Dendritic cell treated with granulocyte-macrophage colony-stimulating factor and Interleukin-4, amounts not matched to agents 40 ng/mL and 50 ng/mL, for 4 days (primary cell): ENCODE measurements at regions of chr12 and their contacts with region 1.

Region 1: DNA sequence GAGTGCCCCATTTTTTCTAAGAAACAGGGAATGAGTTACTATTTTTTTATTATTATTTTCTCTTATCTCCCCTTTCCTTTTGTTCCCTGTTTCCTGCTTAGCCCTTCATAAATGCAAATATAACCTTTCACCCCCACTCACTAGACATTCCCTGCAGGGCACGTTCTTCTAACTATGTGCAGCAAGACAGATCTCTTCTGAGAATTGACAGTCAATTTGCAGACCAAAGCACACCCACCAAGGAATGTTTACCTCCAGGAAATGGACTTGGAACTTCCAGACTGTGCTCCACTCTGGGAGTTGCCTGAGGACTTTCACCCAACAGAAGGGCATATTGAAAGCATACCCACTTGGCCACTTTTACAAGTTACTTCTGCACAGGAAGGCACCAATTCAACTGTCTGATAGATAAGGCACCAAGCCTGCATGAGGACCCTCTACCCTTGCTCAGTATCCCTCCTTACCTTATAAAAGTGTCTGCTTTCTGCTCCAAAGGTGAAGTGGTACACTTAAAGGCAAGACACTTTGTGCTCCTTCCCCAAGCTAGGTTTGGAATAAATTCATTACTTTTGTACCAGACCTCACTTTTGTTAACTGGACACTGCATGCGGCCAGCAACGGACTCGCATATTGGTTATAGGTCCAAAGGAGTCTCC is 6.5 kb downstream of the TAS2R19 start:
- H3K4me3 Mint-ChIP-seq: no peak overlapping the region
- H3K27ac Mint-ChIP-seq: no peak overlapping the region
- H3K4me1 Mint-ChIP-seq: no peaks in the 10 kb centered on the region
- H3K27me3 Mint-ChIP-seq: no peaks in the 10 kb centered on the region

Region 2: DNA sequence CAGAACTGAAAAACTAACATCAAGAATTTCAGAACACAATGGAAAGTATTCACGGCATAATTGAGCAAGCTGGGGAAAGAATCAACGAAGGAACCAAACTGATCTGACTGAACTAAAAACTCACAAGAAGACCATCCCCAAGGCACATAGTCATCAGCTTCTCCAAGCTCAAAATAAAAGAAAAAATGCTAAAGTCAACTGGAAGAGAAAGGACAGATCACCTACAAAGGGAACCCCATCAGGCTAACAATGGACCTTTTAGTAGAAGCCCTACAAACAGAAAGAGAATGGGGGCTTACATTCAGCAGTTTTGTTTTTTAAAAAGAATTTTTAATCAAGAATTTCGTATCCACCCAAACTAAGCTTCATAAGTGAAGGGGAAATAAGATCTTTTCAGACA is 40.9 kb before region 1 on chr12:
- intact Hi-C with region 1: no loop called
- H3K4me3 Mint-ChIP-seq: no peak overlapping the region
- H3K27ac Mint-ChIP-seq: no peak overlapping the region
- H3K4me1 Mint-ChIP-seq: no peaks in the 10 kb centered on the region
- H3K27me3 Mint-ChIP-seq: no peaks in the 10 kb centered on the region

Region 3: GRCh38 chr12:11067514-11067913 is 51.6 kb after region 1 on chr12:
- intact Hi-C with region 1: loop called (anchors 1 kb)
- H3K4me3 Mint-ChIP-seq: no peak overlapping the region
- H3K27ac Mint-ChIP-seq: no peak overlapping the region
- H3K4me1 Mint-ChIP-seq: peaks cover 5% of the 10 kb centered on the region
- H3K27me3 Mint-ChIP-seq: no peaks in the 10 kb centered on the region